ENCODE measurements at regions of chr4 and their contacts with region 1.

Region 1: DNA sequence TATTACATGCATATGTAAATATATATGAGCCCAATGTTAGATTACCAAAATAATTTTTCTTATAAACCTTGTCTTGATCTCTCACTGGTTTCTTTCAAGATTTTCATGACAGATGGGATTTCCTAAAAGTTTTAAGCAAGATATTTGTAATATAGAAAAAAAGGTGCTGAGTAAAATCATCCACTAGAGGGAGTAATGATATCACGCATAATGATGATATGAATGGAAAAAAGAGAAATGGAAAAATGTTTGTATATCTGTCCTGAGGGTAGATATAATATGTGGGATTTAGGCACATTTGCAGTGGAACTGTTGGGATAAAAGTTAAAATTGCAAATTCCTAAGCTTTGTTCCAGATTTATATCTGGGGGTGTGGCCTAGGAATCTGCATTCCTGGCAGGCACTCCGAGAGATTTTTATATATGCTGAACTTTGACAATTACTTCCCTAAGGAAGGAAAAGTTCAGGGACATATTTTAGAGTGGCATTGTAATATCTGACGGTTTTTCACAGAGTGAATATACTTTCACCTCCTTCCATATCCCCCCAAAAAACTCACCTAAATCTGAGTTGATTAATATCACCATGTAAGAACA is 60.5 kb downstream of the TMA16 start:
- DNase-seq: no peak
- H3K4me3 ChIP-seq: no peak overlapping the region
- H3K27ac ChIP-seq: peak overlapping the region in 7 of 59 donors; percentile 2 to 54 (median 11)
- H3K27me3 ChIP-seq: no peaks in the 10 kb centered on the region
- CTCF ChIP-seq: peak; percentile 62 to 98 (median 81)

Region 2: DNA sequence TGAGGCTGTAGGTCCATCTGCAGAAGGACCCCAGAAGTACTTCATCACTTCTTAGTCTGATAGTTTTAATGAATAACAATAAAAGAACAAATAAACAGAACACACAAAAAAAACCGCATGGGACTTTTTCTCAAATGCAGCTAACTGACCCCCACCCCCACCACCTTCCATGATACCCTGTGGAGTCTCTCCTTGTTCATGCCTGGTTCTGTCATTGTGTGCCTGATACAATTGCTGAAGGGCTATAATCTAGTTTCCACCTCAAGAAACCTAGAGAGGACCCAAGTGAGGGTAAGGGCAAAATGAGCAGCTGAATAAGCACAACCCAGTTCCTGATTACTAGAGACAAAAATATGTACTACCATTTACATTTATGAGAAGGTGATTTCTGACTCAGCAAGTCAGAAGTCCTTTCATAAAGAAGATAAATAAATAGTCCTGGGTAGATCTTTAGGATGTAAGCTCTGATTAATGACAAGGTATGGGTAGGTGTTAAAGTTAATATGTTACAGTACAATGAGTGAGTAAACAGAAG is 94.7 kb after region 1 on chr4:
- intact Hi-C with region 1: no loop called
- DNase-seq: no peak
- H3K4me3 ChIP-seq: no peak overlapping the region
- H3K27ac ChIP-seq: no peak overlapping the region
- H3K27me3 ChIP-seq: no peaks in the 10 kb centered on the region
- CTCF ChIP-seq: no peak

Region 3: DNA sequence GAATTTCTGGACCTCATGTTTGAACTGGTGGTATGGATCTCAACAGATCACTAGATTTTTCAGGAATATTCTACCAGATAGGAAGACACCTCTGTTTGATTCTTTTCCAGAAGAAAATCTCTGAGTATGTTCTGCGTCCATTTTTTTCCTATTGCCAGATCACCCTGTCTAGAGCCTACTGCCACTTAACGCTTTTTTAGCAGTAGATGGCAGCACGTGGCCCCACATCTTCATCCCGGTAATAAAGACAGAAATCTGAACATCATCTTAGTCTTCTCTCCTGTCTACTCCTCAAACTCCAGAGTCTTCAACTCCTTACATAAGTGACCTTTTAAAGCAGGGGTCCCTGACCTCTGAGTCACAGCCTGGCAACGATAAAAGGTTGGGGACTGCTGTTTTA is 124.2 kb after region 1 on chr4:
- intact Hi-C with region 1: loop called in 1 of 2 experiments (anchors 5 kb)
- DNase-seq: no peak
- H3K4me3 ChIP-seq: no peak overlapping the region
- H3K27ac ChIP-seq: no peak overlapping the region
- H3K27me3 ChIP-seq: no peaks in the 10 kb centered on the region
- CTCF ChIP-seq: peak in 15 of 56 donors; percentile 6 to 35 (median 16)

Region 4: DNA sequence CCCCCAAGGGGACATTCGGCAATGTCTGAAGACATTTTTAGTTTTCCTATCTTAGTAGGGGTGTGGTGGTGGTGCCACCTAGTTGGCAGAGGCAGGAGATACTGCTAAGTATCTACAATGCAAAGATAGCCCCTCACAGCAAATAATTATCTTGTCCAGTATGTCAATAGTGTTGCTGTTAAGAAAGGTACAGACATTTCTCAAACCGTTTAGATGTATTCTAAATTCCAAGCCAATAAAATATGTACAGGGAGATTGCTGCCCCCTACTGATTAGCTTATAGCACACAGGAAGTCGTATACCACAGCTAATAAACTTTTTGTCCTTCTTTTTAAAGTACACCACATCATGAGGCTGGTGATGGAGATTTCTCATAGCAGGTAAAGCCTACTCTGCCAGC is 200.0 kb after region 1 on chr4:
- intact Hi-C with region 1: loop called (anchors 5 to 10 kb)
- DNase-seq: no peak
- H3K4me3 ChIP-seq: no peak overlapping the region
- H3K27ac ChIP-seq: no peak overlapping the region
- H3K27me3 ChIP-seq: no peaks in the 10 kb centered on the region
- CTCF ChIP-seq: peak in 48 of 56 donors; percentile 10 to 71 (median 42)

Region 5: GRCh38 chr4:163922302-163922701 is 367.3 kb after region 1 on chr4:
- intact Hi-C with region 1: loop called in 1 of 2 experiments (anchors 10 kb)
- DNase-seq: no peak
- H3K4me3 ChIP-seq: no peak overlapping the region
- H3K27ac ChIP-seq: no peak overlapping the region
- H3K27me3 ChIP-seq: no peaks in the 10 kb centered on the region
- CTCF ChIP-seq: no peak

Region 6: GRCh38 chr4:164012396-164013027 is 457.5 kb after region 1 on chr4:
- intact Hi-C with region 1: loop called in 1 of 2 experiments (anchors 2 kb)
- DNase-seq: peak in 2 of 10 donors; percentile 43
- H3K4me3 ChIP-seq: no peak overlapping the region
- H3K27ac ChIP-seq: no peak overlapping the region
- H3K27me3 ChIP-seq: no peaks in the 10 kb centered on the region
- CTCF ChIP-seq: peak in 45 of 56 donors; percentile 7 to 65 (median 38)

Region 7: DNA sequence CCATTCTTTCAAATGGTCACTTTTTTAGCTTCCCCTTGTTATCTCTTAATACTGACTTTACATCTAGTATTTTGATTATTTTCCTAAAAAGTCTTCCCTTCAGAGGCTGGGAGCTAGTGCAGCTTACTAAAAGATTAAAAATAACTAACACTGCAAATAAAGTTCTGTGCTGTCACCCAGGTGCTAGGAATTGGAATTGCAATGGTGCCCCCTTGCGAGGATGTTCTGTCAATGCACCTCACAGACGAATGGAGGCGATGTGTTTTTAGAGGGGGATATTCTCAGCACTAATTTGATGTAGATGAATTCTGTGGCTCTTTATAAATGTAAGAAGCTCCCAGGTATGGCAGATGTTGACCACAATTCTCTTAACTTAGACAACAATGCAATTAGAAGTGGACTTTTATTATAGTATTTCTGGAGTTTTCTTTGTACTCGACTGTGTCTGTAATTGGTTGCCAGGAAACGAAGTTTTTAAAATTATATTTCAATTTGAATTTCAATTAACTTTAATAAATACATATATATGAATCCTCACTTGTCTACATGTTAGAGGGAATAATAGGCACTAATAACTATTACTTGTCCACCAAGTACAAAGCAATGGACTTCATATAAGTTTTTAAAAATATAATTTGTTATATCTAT is 1177.0 kb after region 1 on chr4:
- intact Hi-C with region 1: loop called (anchors 2 to 5 kb)
- DNase-seq: peak in 9 of 10 donors; percentile 12 to 72 (median 54)
- H3K4me3 ChIP-seq: peak overlapping the region in 1 of 59 donors; percentile 3
- H3K27ac ChIP-seq: no peak overlapping the region
- H3K27me3 ChIP-seq: no peaks in the 10 kb centered on the region
- CTCF ChIP-seq: peak; percentile 75 to 97 (median 92)

Region 8: GRCh38 chr4:164748375-164748774 is 1193.4 kb after region 1 on chr4:
- intact Hi-C with region 1: loop called (anchors 5 kb)
- DNase-seq: no peak
- H3K4me3 ChIP-seq: no peak overlapping the region
- H3K27ac ChIP-seq: no peak overlapping the region
- H3K27me3 ChIP-seq: no peaks in the 10 kb centered on the region
- CTCF ChIP-seq: peak; percentile 39 to 79 (median 64)

Measured in dorsolateral prefrontal cortex (tissue), 120 donors.